HepG2 (cell line): ENCODE measurements at regions of chr12 and their contacts with region 1.

Region 1: DNA sequence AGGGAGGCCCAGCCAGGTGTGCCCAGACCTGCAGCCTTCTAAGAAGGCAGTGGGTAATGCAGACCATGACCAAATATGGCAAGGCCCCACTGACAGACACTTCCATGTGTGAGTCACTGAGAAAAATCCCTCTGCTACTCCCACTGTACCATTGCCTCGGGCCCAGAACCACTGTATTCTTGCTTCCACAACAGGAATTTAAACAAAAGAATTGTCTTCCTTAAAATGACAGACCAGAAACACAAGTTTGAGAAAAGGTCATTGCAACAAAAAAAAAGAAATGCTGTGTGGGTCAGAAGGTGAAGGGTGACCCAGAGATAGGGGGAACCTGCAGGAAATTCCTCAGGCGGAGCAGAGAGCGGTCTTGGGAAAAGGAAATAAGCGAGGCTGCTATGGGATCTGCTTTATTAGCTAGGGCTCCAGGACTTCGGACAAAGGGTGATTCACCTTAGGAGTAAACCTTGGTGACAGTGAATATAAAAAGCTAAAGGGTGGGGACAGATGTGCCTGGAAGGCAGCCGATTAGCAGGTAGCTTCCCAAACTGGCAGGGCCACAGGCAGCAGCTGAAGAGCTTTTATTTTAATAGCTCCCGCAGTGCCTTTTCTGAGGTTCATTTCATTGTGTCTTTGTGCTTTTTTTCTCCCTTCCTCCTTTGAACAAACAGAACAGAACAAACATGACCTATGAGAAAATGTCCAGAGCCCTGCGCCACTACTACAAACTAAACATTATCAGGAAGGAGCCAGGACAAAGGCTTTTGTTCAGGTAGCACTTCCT is 185.3 kb upstream of the BCL2L14 start:
- DNase-seq: peak; percentile 94
- ATAC-seq: peak; percentile 91
- H3K4me3 ChIP-seq: peak overlapping the region; percentile 2 to 49 (median 13); a peak in 5 of 6 replicates
- H3K27ac ChIP-seq: peak overlapping the region; percentile 81
- H3K4me1 ChIP-seq: peaks cover 61% of the 10 kb centered on the region
- H3K27me3 ChIP-seq: no peaks in the 10 kb centered on the region
- CTCF ChIP-seq: no peak
- EP300 ChIP-seq: peak in 1 of 2 experiments; percentile 80; a peak in 2 of 4 replicates
- POLR2A ChIP-seq: no peak
- RAD21 ChIP-seq: no peak

Region 2: DNA sequence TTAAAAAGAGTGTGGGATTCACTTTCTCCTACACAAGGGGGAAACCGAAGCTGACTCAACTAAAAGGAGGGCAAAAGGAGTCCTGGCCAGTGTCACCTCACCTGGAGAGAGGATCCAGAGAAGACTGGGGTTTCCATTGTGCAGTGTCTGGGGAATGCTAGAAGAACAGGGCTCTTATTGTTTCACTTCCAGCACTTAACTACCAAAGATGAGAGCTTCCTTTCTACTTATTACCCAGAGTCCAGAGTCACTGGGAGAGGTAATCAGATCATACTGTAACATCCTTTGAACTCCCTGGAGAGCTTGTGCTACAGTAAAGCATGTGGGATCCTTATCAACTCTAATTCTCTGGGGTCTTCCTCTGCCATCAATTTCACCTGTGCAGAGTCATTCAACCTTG is 36.9 kb after region 1 on chr12:
- CTCF ChIA-PET with region 1: no interaction called
- POLR2A ChIA-PET with region 1: no interaction called
- in situ Hi-C with region 1: no loop called
- intact Hi-C with region 1: loop called (anchors 5 kb)
- DNase-seq: peak; percentile 74
- ATAC-seq: peak; percentile 88
- H3K4me3 ChIP-seq: no peak overlapping the region
- H3K27ac ChIP-seq: no peak overlapping the region
- H3K4me1 ChIP-seq: peaks cover 25% of the 10 kb centered on the region
- H3K27me3 ChIP-seq: 0 out of 5 replicates have a peak, but pooled peaks cover 0 to 2% of the 10 kb centered on the region in 2 experiments
- CTCF ChIP-seq: no peak
- EP300 ChIP-seq: peak in 1 of 2 experiments; percentile 5; a peak in 1 of 4 replicates
- POLR2A ChIP-seq: no peak
- RAD21 ChIP-seq: no peak